ENCODE measurements at regions of chr7 and their contacts with region 1.

Region 1: DNA sequence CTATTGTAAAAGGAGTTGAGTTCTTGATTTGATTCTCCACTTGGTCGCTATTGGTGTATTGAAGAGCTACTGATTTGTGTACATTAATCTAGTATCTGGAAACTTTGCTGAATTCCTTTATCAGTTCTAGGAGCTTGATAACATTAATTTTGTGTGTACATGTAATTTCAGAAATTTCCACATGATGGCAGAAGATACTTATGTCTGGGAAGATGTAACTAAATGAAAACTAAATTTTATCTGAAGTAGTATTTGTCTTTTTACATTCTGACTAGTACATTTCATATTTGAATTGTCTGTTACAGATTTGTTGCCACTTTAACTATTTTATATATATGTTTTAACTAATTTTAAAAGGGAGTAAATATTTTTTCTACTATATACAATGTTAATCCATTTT is 27.6 kb downstream of the SDHAF3 start:
- DNase-seq: peak; percentile 11
- H3K4me3 ChIP-seq: no peak overlapping the region
- H3K27ac ChIP-seq: no peak overlapping the region
- H3K4me1 ChIP-seq: no peaks in the 10 kb centered on the region
- H3K27me3 ChIP-seq: no peaks in the 10 kb centered on the region
- CTCF ChIP-seq: peak; percentile 36 to 50

Region 2: DNA sequence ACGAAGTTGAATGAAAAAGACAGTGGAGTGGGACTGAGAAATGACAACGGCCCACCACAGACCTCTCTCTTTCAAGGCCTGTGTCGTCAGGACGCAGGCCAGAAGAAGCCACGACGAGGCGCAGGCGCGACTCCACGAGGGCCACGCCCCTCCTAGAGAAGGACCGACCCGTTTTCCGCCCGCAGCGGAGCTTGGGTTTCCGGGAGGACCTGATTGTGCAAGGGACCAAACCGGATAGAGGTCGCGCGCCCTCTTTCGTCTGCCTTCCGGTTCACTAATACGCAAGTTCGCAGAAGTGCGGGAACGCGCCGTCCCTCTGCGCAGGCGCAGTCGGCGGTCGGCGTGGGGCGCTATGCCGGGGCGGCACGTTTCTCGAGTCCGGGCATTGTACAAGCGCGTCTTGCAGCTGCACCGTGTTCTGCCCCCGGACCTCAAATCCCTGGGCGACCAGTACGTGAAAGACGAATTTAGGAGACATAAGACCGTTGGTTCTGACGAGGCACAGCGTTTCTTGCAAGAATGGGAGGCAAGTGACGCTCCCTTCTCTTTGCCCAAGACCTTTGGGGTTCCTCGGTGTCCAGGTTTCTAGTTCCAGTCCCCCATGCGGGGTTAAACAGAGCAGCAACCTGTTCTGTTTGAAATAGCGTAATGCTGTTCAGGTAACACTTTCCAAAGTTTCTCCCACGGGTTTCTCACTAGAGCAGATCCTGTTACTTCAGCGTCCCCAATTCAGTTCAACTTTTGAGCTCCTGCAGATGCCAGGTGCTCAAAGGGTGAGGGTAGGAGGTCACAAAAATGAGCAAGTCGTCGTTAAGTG is 27.5 kb before region 1 on chr7 and contains the start of gene SDHAF3:
- CTCF ChIA-PET with region 1: no interaction called
- dilution Hi-C with region 1: no loop called
- in situ Hi-C with region 1: no loop called
- intact Hi-C with region 1: no loop called
- DNase-seq: peak; percentile 95
- H3K4me3 ChIP-seq: peak within 1 kb of the TSS; percentile 60 to 87 (median 76)
- H3K27ac ChIP-seq: peak within 1 kb of the TSS; percentile 52
- H3K4me1 ChIP-seq: no peaks in the 10 kb centered on the region
- H3K27me3 ChIP-seq: no peaks in the 10 kb centered on the region
- CTCF ChIP-seq: no peak
- total RNA-seq, gene SDHAF3: 10.0 to 21.6 TPM

Region 3: DNA sequence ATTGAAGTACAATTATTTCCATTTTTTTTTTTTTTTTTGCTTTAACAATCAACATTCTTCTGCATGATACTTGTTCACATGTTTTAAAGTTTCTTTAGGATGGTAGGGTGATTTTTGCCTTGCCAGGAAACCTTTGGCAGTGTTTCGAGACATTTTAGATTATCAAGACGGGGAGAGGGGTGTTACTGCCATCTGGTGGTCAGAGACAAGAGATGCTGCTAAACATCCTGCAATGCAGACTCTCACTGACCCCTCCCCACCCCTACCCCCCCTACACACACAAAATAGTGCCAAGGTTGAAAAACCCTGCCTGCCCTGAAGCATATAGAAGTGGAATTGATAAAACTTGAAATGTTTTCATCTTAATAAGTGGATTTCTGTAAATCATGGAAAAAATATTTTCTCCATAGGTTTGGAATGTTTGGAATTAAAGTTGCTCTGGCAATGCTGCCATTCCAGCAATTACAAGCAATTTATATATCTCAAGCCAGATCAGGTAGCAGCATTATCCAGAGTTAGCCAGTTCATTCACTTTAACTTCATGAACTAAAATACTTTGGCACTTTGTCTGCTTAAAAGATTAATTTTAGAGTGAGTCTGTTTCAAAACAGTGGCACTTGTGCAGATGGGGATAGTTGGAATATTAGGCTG is 34.5 kb after region 1 on chr7:
- CTCF ChIA-PET with region 1: no interaction called
- dilution Hi-C with region 1: no loop called
- in situ Hi-C with region 1: no loop called
- intact Hi-C with region 1: loop called (anchors 1 kb)
- DNase-seq: peak; percentile 32
- H3K4me3 ChIP-seq: no peak overlapping the region
- H3K27ac ChIP-seq: no peak overlapping the region
- H3K4me1 ChIP-seq: no peaks in the 10 kb centered on the region
- H3K27me3 ChIP-seq: no peaks in the 10 kb centered on the region
- CTCF ChIP-seq: peak; percentile 54 to 78

Region 4: DNA sequence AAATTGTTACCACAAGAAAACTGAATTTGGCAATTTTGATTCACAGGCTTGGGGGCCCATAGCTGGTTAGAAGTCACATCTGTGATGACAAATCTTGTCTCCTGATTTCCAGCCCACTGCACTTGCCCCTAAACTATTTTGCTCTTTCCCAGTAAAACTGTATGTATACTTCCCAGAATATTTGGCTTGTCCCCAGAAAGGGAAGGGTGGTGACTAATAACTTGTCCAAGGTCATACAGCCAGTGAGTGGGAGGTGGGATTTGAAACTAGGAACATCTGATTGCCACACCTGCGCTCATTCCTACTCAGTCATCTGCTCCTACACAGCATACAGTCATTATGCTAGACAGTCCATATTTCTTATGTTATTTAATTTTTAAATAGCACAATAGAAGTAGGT is 277.0 kb after region 1 on chr7:
- CTCF ChIA-PET with region 1: no interaction called
- dilution Hi-C with region 1: no loop called
- in situ Hi-C with region 1: no loop called
- intact Hi-C with region 1: no loop called
- DNase-seq: no peak
- H3K4me3 ChIP-seq: no peak overlapping the region
- H3K27ac ChIP-seq: no peak overlapping the region
- H3K4me1 ChIP-seq: no peaks in the 10 kb centered on the region
- H3K27me3 ChIP-seq: no peaks in the 10 kb centered on the region
- CTCF ChIP-seq: no peak

Region 5: DNA sequence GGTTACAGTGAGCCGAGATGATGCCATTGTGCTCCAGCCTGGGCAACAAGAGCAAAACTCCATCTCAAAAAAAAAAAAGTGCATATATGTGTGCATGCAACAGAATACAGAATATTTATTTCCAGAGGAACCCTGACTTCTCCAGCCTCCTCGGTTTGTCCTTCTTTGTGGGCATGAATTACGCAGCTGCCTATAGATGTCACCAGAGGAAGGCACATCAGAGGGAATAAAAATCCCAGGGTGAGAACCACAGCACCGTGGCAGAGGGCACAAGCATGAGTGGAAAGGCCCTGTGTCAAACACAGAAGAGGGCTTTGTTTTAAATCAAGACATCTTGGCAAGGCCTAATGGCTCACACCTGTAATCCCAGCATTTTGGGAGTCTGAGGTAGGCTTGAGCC is 869.3 kb after region 1 on chr7:
- CTCF ChIA-PET with region 1: interaction called, 21 read pairs
- dilution Hi-C with region 1: no loop called
- in situ Hi-C with region 1: no loop called
- intact Hi-C with region 1: loop called (anchors 5 kb)
- DNase-seq: no peak
- H3K4me3 ChIP-seq: no peak overlapping the region
- H3K27ac ChIP-seq: no peak overlapping the region
- H3K4me1 ChIP-seq: no peaks in the 10 kb centered on the region
- H3K27me3 ChIP-seq: no peaks in the 10 kb centered on the region
- CTCF ChIP-seq: peak in 1 of 2 donors; percentile 2